Common myeloid progenitor, CD34-positive (primary cell): ENCODE measurements at regions of chr15 and their contacts with region 1.

Region 1: DNA sequence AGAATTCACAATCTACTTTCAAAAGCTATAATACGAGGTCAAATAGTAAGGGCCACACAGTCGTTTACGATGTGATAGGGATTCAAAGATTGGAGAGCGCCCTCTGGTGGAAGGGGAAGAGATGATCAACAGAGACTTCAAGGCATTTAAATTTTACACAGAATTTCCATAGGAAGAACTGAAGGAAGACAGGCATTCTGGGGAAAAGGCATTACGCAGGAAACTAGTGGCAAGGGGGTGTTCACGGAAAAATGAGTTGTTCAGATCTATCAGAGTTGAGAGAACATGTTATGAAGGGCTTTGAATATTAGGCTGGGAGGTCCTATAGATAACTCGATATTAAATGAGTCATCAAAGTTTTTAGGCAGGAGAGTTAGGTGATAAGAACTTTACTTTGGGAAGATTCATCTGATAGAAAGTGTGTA is 128.7 kb downstream of the FRMD5 start:
- DNase-seq: peak; percentile 68 to 80 (median 75)
- H3K4me3 ChIP-seq: no peak overlapping the region
- H3K27ac ChIP-seq: no peak overlapping the region
- H3K4me1 ChIP-seq: no peaks in the 10 kb centered on the region
- H3K27me3 ChIP-seq: peaks cover 0 to 16% (median 7%) of the 10 kb centered on the region in 5 experiments

Region 2: DNA sequence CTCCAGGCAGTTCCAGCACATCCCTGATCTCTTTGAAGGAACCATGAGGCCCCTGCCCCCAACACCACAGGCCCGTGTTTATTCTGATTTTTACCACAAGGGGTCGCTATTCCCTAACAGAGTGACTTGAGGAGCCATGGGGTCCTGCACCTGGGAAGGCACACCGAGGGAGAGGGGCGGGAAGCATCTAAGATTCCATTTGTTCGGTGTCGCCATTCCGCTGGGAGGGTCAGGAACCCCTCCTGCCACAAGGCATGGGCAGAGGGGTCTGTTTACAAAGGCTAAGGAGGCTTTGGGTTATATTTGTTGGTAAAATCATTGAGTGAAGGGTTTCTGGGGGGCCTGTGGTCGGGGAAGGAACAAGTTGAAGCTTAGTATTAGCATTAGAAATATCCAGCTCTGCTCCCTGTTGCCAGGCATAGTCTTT is 162.5 kb before region 1 on chr15:
- CTCF ChIA-PET with region 1: interaction called, 25 read pairs
- POLR2A ChIA-PET with region 1: no interaction called
- DNase-seq: peak; percentile 61 to 79 (median 70)
- H3K4me3 ChIP-seq: peak overlapping the region in 2 of 7 experiments; percentile 2 to 11
- H3K27ac ChIP-seq: no peak overlapping the region
- H3K4me1 ChIP-seq: peaks cover 0 to 12% (median 2%) of the 10 kb centered on the region in 4 experiments
- H3K27me3 ChIP-seq: no peaks in the 10 kb centered on the region

Region 3: DNA sequence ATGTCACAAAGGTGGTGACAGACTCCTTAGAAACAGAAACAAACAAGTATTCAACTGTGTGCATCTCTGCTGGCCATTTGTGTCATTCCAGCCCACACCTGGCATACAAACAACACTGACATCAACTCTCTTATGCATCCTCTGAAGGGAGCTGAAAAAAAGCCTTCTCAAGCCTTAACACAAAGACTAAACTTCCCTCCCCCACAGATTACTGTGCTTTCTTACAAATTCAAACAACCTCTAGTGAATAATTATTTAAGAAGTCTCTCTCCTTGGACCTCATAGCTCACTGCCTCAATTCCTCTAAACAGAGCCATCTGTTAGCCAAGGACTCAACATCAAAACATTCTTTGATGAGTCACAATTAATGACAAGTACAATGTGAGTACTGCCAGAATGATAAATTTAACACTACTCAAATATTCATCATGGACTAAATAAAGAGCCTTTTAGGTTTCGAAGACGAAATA is 107.4 kb before region 1 on chr15:
- CTCF ChIA-PET with region 1: no interaction called
- POLR2A ChIA-PET with region 1: no interaction called
- DNase-seq: no peak
- H3K4me3 ChIP-seq: no peak overlapping the region
- H3K27ac ChIP-seq: no peak overlapping the region
- H3K4me1 ChIP-seq: no peaks in the 10 kb centered on the region
- H3K27me3 ChIP-seq: peaks cover 0 to 5% (median 0%) of the 10 kb centered on the region in 5 experiments

Region 4: DNA sequence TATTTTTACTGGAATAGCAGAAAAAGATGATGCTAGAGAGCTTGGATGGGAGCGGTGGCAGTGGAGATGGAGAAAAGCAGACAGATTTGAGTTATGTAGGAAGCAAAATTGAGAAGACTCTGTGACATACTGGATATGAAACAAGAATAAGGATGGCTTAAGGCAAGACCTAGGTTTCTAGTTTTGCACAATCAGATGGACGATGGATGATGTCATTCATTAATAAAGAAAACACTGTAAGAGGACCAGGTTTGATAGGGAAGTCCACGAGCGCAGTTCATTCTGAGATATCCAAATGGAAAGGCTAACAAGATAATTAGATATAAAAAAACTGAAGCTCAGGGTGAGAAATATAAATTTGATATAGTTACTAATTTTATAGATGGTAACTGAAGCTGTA is 12.9 kb before region 1 on chr15:
- CTCF ChIA-PET with region 1: interaction called, 13 read pairs
- POLR2A ChIA-PET with region 1: interaction called, 3 read pairs
- DNase-seq: no peak
- H3K4me3 ChIP-seq: no peak overlapping the region
- H3K27ac ChIP-seq: no peak overlapping the region
- H3K4me1 ChIP-seq: peaks cover 0 to 4% (median 0%) of the 10 kb centered on the region in 4 experiments
- H3K27me3 ChIP-seq: peaks cover 3 to 32% (median 15%) of the 10 kb centered on the region in 5 experiments